Heart right ventricle (tissue), 16 donors: ENCODE measurements at regions of chr22 and their contacts with region 1.

Region 1: DNA sequence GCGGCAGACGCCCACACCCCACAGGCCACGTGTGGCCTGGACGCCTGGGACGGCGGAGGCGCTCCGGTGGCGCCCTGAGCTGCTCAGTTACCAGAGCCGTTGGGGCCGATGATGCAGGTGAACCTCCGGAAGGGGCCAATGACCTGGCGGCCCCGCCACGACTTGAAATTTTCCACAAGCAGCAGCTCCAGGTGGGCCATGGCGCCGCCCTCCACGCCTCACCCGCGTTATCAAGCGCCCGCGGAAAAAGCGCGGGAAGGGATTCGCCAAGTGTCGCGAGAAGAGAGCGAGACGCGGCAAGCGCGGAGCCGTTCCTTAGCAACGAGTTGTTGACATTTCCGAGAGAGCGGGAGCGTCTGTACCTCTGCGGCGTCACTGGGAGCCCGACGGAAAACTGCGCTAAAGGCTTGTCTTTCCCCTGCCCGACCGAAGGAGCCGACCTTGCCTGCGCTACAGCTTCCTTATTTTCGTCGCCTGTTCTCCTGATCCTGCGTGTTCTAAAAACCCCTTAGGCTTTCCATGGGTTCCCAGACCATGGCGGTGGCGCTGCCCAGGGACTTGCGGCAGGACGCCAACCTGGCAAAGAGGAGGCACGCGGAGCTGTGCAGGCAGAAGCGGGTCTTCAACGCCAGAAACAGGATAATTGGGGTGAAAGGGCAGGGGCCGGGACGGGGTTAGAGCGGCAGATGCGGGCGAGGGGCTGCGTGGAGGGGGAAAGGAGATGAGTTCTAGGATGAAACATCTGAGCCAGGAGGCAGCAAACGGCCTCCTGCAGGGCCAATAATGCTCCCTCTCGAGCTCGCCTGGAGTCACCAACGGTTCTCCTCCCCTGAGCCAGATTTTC is at the starts of genes RIBC2 and SMC1B:
- DNase-seq: peak; percentile 74 to 80
- ATAC-seq: peak; percentile 85 to 96 (median 90)
- H3K4me3 ChIP-seq: peak within 1 kb of the TSS; percentile 28 to 61 (median 47)
- H3K27ac ChIP-seq: peak within 1 kb of the TSS in 3 of 10 donors; percentile 26 to 43 (median 28)
- H3K4me1 ChIP-seq: peaks cover 0 to 21% (median 11%) of the 10 kb centered on the region in 9 donors
- H3K27me3 ChIP-seq: peaks cover 0 to 12% (median 0%) of the 10 kb centered on the region in 7 donors
- CTCF ChIP-seq: peak in 1 of 9 donors; percentile 10
- total RNA-seq, gene RIBC2: 0.20 to 1.2 TPM in 2 of 10 donors, not detected in the others
- total RNA-seq, gene SMC1B: 0.05 TPM in 1 of 10 donors, not detected in the others

Region 2: GRCh38 chr22:45344334-45344733 is 69.3 kb before region 1 on chr22:
- intact Hi-C with region 1: loop called in 1 of 10 experiments (anchors 5 kb)
- DNase-seq: no peak
- ATAC-seq: peak in 3 of 8 donors; percentile 33 to 62 (median 56)
- H3K4me3 ChIP-seq: no peak overlapping the region
- H3K27ac ChIP-seq: no peak overlapping the region
- H3K4me1 ChIP-seq: peaks cover 0 to 16% (median 12%) of the 10 kb centered on the region in 9 donors
- H3K27me3 ChIP-seq: no peaks in the 10 kb centered on the region
- CTCF ChIP-seq: peak in 4 of 9 donors; percentile 7 to 33 (median 23)

Region 3: DNA sequence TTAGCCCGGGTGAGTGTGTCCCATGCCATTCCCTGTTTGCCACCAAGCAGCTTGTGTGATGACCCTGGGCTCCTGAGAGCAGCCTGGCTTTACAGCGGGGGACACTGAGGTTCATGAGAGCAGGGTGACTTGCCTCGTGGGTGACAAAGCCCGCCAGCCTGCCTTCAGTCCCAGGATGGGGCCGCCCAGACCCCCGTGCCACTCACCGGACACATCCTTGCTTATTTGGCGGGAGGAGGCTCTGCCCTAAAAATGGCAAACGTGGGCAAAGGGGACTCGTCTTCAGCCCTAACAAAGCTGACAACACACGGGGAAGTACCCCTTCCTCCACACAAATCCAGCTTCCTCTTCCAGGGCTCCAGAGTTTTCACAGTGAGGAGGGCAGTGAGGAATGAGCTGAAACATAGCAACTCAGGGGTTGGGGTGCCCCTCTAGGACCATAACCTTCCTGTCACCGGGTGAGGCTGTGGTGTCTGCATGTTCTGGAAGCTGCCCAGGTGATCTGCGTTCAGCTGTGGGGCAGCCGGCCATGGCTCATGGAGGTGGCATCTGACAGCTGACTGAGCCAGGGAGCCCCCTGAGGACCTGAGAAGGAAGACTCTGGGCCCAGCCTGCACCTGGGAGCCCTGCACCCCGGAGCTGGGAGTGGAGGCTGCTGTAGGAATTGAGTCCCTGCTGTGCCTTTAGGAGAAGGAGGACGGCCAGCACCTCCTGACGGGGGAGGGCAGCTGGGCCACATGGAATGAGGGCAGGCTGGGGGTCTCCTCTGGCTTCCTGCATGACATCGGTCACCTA is 16.6 kb after region 1 on chr22:
- intact Hi-C with region 1: loop called in 1 of 10 experiments (anchors 1 kb)
- DNase-seq: no peak
- ATAC-seq: no peak
- H3K4me3 ChIP-seq: no peak overlapping the region
- H3K27ac ChIP-seq: no peak overlapping the region
- H3K4me1 ChIP-seq: peaks cover 0 to 8% (median 2%) of the 10 kb centered on the region in 9 donors
- H3K27me3 ChIP-seq: peaks cover 0 to 4% (median 0%) of the 10 kb centered on the region in 7 donors
- CTCF ChIP-seq: no peak